Esophagus muscularis mucosa (tissue), 4 donors: ENCODE measurements at regions of chr10 and their contacts with region 1.

Region 1: GRCh38 chr10:122342293-122343134 is 32.0 kb upstream of the PLEKHA1 start:
- DNase-seq: no peak
- H3K4me3 ChIP-seq: no peak overlapping the region
- H3K27ac ChIP-seq: peak overlapping the region; percentile 70 to 86 (median 84)
- H3K4me1 ChIP-seq: peaks cover 42 to 62% (median 59%) of the 10 kb centered on the region in 4 donors
- H3K27me3 ChIP-seq: no peaks in the 10 kb centered on the region
- CTCF ChIP-seq: peak; percentile 84 to 89 (median 86)
- EP300 ChIP-seq: no peak
- POLR2A ChIP-seq: no peak

Region 2: DNA sequence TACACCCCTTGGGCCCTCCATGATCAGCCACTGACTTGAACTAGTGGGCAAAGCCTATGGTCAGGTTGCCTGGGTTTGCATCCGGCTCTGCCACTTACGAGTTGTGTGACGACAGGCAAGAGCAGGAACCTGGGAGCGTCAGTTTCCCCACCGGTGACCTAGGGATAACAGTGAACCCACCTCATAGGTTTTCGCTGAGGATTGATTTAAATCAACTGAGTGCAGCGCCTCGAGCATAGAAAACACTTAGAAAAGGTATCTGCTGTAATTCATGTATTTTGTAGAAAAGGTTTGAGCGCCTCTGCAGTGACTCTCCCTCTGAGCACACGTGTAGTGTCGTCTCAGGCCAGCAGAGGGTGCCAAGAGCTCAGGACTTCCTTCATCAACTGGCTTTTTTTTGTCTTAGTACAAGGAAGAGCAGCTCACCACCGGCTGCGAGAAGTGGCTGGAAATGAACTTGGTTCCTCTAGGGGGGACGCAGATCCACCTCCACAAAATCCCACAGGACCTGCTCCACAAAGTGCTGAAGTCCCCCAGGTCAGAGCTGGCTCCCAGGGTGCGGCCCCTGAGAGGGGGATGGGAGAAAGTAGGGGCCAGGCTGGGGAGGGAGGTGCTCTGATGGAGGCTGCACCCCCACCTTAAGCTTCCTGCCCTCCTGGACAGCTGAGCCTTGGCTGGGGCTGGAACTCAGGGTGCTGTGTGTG is 43.8 kb before region 1 on chr10:
- intact Hi-C with region 1: loop called (anchors 2 kb)
- DNase-seq: peak; percentile 90
- H3K4me3 ChIP-seq: peak overlapping the region in 3 of 4 donors; percentile 19 to 48 (median 19)
- H3K27ac ChIP-seq: peak overlapping the region in 1 of 4 donors; percentile 34
- H3K4me1 ChIP-seq: peaks cover 0 to 27% (median 26%) of the 10 kb centered on the region in 4 donors
- H3K27me3 ChIP-seq: no peaks in the 10 kb centered on the region
- CTCF ChIP-seq: peak; percentile 93 to 96 (median 96)
- EP300 ChIP-seq: no peak
- POLR2A ChIP-seq: no peak

Region 3: DNA sequence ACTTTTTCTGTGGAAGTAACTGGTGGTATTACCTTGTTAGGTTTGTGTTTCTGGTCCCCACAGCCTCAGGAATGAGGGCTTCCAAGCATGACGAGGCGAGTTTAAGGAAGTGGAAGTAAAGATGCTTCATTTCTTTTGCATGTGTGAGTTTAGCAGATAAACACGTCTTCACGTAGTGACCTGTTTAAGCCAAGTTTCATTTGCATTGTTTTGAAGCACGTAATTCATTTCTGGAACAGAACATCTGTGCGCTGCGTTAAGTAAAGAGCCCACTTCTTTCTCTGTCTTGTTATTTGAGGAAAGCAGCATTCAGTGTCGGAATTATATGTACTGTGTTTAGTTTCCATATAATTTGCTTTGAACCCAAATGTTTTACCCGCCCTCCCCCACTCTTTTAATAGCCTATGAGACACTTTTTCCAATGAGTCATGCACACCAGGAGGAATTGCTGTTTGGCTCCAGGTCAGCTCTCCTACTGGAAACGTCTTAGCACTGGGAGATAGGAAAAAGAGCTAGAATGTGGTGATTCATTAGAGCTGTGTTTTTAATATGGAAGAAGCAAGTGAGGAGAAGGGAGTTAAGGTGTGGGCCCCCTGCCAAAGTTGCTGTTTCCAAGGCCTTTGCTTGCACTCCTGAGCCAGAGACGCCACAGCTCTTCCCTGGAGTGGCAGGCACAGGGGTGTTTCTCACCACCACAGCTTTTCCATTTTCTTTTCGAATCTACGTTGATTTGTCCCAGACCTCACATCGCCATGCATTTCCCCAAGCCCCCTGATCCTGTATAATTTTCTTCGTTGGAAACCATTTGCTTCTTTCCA is 34.6 kb before region 1 on chr10:
- intact Hi-C with region 1: loop called (anchors 2 kb)
- DNase-seq: no peak
- H3K4me3 ChIP-seq: peak overlapping the region; percentile 16 to 36 (median 28)
- H3K27ac ChIP-seq: peak overlapping the region; percentile 88 to 92 (median 92)
- H3K4me1 ChIP-seq: peaks cover 24 to 50% (median 44%) of the 10 kb centered on the region in 4 donors
- H3K27me3 ChIP-seq: no peaks in the 10 kb centered on the region
- CTCF ChIP-seq: no peak
- EP300 ChIP-seq: peak; percentile 82
- POLR2A ChIP-seq: no peak

Region 4: DNA sequence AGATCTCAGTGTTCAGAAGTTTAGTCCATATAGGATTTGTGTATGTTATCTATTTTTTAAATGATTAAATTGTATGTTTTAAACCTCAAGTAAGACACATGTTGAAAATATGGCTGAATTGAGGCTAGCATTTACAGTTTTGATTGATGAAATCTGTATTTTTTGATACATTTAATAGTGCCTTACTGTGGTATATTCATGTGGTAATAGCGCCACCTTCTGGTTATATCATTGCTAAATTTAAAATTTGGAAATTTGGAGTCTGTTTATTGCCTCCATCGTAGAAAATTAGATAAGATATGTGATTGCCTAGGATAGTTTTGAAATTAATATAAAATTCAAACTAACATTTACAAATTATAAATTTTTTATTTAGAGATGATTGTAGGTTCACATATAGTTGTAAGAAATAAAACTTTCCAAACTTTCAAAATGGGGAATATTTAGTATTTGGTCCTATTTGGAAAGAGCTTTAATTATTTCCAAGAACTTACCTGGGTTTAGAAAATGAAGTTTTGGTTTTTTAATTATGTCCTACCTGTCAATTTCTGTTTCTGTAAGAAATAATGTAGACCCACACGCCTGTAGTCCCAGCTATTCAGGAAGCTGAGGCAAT is 92.8 kb after region 1 on chr10:
- intact Hi-C with region 1: loop called (anchors 1 kb)
- DNase-seq: no peak
- H3K4me3 ChIP-seq: no peak overlapping the region
- H3K27ac ChIP-seq: no peak overlapping the region
- H3K4me1 ChIP-seq: no peaks in the 10 kb centered on the region
- H3K27me3 ChIP-seq: no peaks in the 10 kb centered on the region
- CTCF ChIP-seq: peak; percentile 61 to 70 (median 70)
- EP300 ChIP-seq: no peak
- POLR2A ChIP-seq: no peak

Region 5: DNA sequence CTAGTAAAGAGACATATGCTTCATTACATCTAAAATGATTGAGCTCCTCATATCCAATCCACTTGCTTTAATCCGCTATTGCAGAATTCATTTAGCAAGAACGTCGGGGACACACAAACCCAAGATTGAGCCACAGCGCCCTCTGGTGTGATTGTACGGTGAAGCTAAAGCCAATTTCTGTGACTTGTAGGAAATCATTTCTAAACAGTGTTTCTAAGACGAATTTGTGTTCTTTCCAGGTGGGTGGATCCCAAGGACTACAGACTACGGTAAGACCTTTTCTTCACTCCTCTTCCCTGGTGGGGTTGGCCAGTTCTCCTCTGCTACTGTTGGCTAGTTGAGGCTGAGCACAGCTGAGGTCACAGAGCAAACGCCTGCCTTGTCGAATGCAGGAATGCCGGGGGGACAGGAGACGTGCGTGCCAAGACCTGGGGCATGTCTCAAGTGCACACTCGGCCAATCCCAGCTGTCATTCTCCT is 223.3 kb after region 1 on chr10:
- intact Hi-C with region 1: loop called (anchors 5 kb)
- DNase-seq: peak; percentile 94
- H3K4me3 ChIP-seq: peak overlapping the region; percentile 32 to 47 (median 36)
- H3K27ac ChIP-seq: peak overlapping the region in 2 of 4 donors; percentile 28 to 39
- H3K4me1 ChIP-seq: peaks cover 4 to 9% (median 9%) of the 10 kb centered on the region in 4 donors
- H3K27me3 ChIP-seq: peaks cover 0 to 23% (median 0%) of the 10 kb centered on the region in 4 donors
- CTCF ChIP-seq: peak; percentile 82 to 88 (median 85)
- EP300 ChIP-seq: no peak
- POLR2A ChIP-seq: no peak